CD4-positive, alpha-beta memory T cell (primary cell): ENCODE measurements at regions of chr12 and their contacts with region 1.

Region 1: DNA sequence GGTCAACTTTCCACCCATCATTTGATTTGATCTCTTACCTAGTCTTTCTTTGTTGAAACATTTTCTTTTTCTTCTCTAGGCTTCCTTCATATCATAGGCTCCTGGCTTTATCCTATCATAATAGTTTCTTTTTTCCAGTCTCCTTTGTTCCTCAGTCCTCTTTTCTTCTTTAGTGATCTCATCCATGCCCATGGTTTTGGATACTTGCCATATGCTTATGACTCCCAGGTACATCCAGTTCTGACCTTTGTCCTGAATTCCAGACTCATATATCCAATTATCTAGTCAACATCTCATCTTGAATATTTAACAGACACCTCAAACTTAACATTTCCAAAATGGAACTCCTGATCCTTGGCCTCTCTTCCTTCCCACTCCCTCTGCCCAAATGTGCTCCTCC is 36.1 kb upstream of the KRAS start:
- DNase-seq: no peak
- H3K4me3 ChIP-seq: no peak overlapping the region
- H3K4me3 Mint-ChIP-seq: no peak overlapping the region
- H3K27ac ChIP-seq: no peak overlapping the region
- H3K27ac Mint-ChIP-seq: no peak overlapping the region
- H3K4me1 ChIP-seq: peaks cover 19% of the 10 kb centered on the region
- H3K4me1 Mint-ChIP-seq: peaks cover 11 to 25% (median 15%) of the 10 kb centered on the region in 4 donors
- H3K27me3 ChIP-seq: no peaks in the 10 kb centered on the region
- H3K27me3 Mint-ChIP-seq: peaks cover 0 to 3% of the 10 kb centered on the region in 2 donors

Region 2: GRCh38 chr12:25301803-25302202 is 15.0 kb after region 1 on chr12:
- CTCF ChIA-PET with region 1: no interaction called
- POLR2A ChIA-PET with region 1: no interaction called
- intact Hi-C with region 1: no loop called
- DNase-seq: no peak
- H3K4me3 ChIP-seq: no peak overlapping the region
- H3K4me3 Mint-ChIP-seq: no peak overlapping the region
- H3K27ac ChIP-seq: no peak overlapping the region
- H3K27ac Mint-ChIP-seq: no peak overlapping the region
- H3K4me1 ChIP-seq: no peaks in the 10 kb centered on the region
- H3K4me1 Mint-ChIP-seq: no peaks in the 10 kb centered on the region
- H3K27me3 ChIP-seq: no peaks in the 10 kb centered on the region
- H3K27me3 Mint-ChIP-seq: peaks cover 2 to 9% of the 10 kb centered on the region in 2 donors

Region 3: DNA sequence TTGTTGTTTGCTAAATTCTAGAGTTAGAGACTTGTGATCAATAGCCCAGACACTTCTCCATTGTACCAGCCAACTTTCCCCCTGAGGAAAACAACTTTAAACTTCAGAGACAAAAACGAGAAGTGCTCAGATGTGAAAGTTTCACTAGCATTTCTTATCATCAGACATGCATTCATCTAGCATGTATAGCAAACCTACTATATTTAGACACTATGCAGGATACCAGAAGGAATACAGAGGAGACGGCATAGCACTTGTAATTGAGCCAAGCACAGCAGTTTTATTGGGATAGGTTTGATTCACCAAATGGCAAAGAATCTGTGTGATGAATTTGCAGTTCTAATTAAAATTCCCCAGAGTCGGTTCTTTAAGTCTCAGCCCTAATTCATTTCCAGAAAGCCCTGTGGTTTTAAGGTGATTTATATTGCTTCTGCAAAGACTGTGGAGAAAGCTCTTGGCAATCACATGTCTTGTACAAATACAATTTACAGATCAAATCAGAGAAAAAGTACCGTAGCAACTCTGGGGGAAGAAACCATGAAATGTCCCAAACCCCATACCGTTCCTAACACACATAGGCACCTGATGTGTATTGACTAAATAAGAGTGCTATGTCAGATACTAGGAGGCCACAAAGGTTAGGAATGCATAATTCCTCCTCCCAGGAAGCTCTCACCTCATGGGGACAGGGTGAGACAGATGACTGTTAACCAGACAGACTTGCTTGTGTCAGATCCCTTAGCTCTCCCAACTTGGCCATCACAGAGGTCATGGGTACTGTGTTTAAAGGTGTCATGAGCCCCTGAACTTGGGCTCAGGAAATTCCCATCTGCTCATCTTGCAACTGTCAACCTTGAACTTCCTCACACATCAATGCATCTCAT is 33.5 kb after region 1 on chr12:
- CTCF ChIA-PET with region 1: interaction called, 3 read pairs
- POLR2A ChIA-PET with region 1: no interaction called
- intact Hi-C with region 1: loop called (anchors 5 kb)
- DNase-seq: no peak
- H3K4me3 ChIP-seq: no peak overlapping the region
- H3K4me3 Mint-ChIP-seq: no peak overlapping the region
- H3K27ac ChIP-seq: no peak overlapping the region
- H3K27ac Mint-ChIP-seq: peak overlapping the region in 1 of 7 donors; percentile 6
- H3K4me1 ChIP-seq: peaks cover 30% of the 10 kb centered on the region
- H3K4me1 Mint-ChIP-seq: peaks cover 33 to 44% (median 37%) of the 10 kb centered on the region in 4 donors
- H3K27me3 ChIP-seq: no peaks in the 10 kb centered on the region
- H3K27me3 Mint-ChIP-seq: no peaks in the 10 kb centered on the region